ENCODE measurements at regions of chr5 and their contacts with region 1.

Region 1: DNA sequence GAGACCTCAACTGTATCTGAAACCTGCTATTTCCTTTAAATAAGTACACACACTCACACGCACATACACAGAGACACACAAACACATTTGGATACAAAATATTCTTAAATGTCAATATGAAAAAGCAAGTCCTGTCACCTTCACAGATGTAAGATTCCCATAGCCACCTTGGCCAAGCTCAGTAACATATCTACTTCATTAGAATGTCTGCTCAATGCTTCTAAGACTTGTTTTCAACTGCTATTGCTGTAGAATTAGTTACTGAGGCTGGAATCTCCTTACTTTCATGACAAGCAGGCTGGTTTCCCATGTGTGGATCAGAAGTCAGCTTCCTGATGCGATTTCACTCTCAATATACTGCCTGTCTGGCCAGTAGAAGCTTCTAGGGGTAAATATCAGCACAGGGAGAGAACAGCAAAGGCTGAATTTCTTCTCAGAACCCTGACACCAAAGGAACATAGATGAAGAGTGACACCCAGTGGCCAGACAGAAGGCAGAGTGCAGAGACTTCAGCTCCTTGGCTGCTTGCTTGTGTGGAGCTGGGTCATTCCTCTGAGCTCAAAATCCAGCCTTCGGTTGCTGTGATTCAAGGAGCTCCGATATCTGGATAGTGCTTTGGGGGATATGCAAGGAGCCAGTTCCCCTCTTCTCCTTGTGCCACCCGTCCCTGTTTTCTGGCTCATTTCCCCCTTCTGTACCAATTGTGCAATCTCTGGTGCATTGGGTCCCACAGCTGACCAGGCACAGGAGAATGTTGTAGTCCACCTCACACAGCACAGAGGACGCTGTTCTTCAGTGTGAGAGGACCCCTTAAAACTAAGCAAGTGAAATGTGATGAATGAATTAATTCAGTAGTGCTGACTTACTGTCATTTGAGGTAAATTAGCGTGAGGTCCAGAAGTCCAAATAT is 26.6 kb upstream of the ABLIM3 start:
- DNase-seq: peak; percentile 54
- H3K4me3 ChIP-seq: peak overlapping the region in 1 of 2 experiments; percentile 8; a peak in 1 of 4 replicates
- H3K27ac ChIP-seq: 0 out of 4 replicates have a peak overlapping the region, but pooled peaks of 1 of the 2 experiments have one; percentile 2
- H3K4me1 ChIP-seq: peaks cover 0 to 8% of the 10 kb centered on the region in 2 experiments; a peak in 1 of 4 replicates
- H3K27me3 ChIP-seq: no peaks in the 10 kb centered on the region
- CTCF ChIP-seq: peak; percentile 85
- EP300 ChIP-seq: no peak
- RAD21 ChIP-seq: peak; percentile 95

Region 2: GRCh38 chr5:148740966-148741742 is 373.5 kb before region 1 on chr5:
- CTCF ChIA-PET with region 1: interaction called, 233 read pairs
- POLR2A ChIA-PET with region 1: no interaction called
- DNase-seq: peak; percentile 39
- H3K4me3 ChIP-seq: no peak overlapping the region
- H3K27ac ChIP-seq: no peak overlapping the region
- H3K4me1 ChIP-seq: no peaks in the 10 kb centered on the region
- H3K27me3 ChIP-seq: no peaks in the 10 kb centered on the region
- CTCF ChIP-seq: peak; percentile 72
- EP300 ChIP-seq: no peak
- RAD21 ChIP-seq: peak; percentile 80

Region 3: DNA sequence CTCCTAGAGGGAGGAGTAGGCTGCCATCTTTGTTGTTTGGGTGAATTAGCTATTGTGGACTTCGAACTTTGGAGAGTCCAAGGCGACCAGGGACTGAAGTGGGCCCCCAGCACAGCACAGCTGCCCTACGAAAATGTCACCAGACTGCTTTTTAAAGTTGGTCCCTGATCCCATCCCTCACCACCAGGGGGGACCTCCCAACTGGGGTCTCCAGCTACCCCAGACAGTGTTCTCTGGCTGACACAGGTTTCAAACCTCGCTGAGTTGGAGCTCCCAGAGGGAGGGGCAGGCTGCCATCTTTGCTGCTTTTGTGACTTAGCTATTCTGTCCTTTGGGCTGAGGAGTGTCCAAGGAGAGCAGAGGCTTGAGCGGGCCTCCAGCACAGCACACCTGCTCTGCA is 333.9 kb before region 1 on chr5:
- CTCF ChIA-PET with region 1: interaction called, 10 read pairs
- POLR2A ChIA-PET with region 1: no interaction called
- DNase-seq: no peak
- H3K4me3 ChIP-seq: no peak overlapping the region
- H3K27ac ChIP-seq: no peak overlapping the region
- H3K4me1 ChIP-seq: no peaks in the 10 kb centered on the region
- H3K27me3 ChIP-seq: no peaks in the 10 kb centered on the region
- CTCF ChIP-seq: no peak
- EP300 ChIP-seq: no peak
- RAD21 ChIP-seq: no peak

Region 4: DNA sequence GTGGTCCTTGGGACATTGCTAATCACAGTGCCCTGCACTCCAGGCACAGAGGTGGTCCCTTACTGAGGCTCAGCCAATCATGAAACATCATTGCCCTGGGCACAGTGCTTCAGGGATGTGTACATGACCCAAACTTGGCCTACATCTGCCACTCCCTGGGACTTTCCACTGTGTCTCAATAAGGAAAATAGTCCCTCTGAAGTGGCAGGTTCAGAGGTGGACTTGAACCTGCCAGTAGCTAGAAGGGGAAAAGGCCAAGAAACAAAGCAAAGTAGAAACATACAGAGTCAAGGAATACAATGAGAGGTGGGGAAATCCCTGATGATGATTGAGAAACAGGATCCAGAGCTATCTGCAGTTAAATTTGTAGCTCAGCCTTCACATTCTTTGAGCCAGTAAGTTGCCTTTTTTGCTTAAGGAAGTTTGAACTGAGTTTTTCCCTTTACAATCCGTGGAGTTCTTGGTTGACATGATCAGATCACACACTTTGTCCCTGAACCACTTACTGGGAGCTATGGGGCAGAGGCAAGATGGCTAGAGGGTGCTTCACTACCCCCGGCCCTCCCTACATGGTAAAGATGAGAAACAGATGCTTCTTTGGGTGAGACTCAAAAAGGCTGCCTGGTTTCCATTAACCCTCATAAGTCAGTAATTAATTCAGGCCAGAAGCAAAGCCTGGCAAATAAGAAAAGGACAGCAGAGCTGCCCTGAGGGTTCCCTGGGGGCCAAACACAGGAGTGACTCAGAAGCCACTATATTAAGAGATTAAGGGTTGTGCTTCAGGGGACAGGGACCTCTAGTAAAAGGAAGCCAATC is 109.4 kb before region 1 on chr5:
- CTCF ChIA-PET with region 1: interaction called, 20 read pairs
- POLR2A ChIA-PET with region 1: no interaction called
- DNase-seq: peak; percentile 70
- H3K4me3 ChIP-seq: no peak overlapping the region
- H3K27ac ChIP-seq: no peak overlapping the region
- H3K4me1 ChIP-seq: peaks cover 7 to 12% of the 10 kb centered on the region in 2 experiments; a peak in 3 of 4 replicates
- H3K27me3 ChIP-seq: no peaks in the 10 kb centered on the region
- CTCF ChIP-seq: no peak
- EP300 ChIP-seq: peak; percentile 80 to 93
- RAD21 ChIP-seq: no peak

Region 5: GRCh38 chr5:149053072-149053695 is 61.5 kb before region 1 on chr5:
- CTCF ChIA-PET with region 1: interaction called, 14 read pairs
- POLR2A ChIA-PET with region 1: no interaction called
- DNase-seq: no peak
- H3K4me3 ChIP-seq: no peak overlapping the region
- H3K27ac ChIP-seq: peak overlapping the region in 1 of 2 experiments; percentile 39; a peak in 1 of 4 replicates
- H3K4me1 ChIP-seq: peaks cover 0 to 10% of the 10 kb centered on the region in 2 experiments; a peak in 2 of 4 replicates
- H3K27me3 ChIP-seq: no peaks in the 10 kb centered on the region
- CTCF ChIP-seq: no peak
- EP300 ChIP-seq: no peak
- RAD21 ChIP-seq: no peak

Region 6: DNA sequence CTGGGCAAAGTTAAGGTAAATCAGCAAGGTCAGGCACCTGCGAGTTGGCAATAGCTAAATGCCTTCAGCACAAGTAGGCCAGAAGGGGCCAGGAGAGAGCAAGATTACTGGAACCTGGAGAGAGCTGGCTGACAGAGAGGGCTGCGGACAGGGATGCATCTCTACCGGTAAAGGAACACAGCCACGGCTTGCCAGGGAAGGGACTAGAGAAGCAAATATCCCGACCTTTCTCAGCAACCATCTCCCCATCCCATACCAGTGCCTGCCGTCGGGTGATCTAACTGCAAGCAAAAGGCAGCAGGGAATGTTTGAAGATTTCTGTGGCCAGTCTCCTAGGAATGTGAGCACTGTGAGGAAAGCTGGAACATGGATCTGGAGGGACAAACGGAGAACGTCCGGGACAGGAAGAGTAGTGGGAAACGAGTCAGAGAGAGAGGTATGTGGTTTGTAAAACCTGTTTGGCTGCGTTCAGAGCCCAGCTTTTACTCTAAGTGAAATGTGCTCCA is 10.8 kb after region 1 on chr5:
- CTCF ChIA-PET with region 1: interaction called, 23 read pairs
- POLR2A ChIA-PET with region 1: no interaction called
- DNase-seq: no peak
- H3K4me3 ChIP-seq: no peak overlapping the region
- H3K27ac ChIP-seq: no peak overlapping the region
- H3K4me1 ChIP-seq: no peaks in the 10 kb centered on the region
- H3K27me3 ChIP-seq: no peaks in the 10 kb centered on the region
- CTCF ChIP-seq: peak; percentile 36; the same call in 1 of the 2 replicates
- EP300 ChIP-seq: no peak
- RAD21 ChIP-seq: no peak

Region 7: DNA sequence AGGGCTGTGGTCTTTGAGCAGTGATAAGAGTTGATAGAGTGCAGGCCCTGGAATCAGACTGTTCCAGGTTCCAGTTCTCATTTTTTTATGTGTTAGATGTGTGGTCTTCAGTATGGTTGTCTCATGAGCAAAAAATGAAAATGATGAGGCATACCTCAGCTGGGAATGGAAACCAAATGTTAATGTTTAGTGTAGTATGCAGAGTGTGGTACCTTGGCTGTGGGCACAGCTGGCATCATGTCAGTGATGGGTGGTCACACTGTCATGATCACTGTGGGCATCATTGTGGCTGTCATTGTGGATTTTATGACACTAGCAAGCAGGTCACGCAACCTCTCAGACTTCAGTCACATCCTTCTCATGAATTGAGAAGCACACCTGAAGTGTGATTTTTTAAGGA is 33.0 kb after region 1 on chr5:
- CTCF ChIA-PET with region 1: no interaction called
- POLR2A ChIA-PET with region 1: no interaction called
- DNase-seq: no peak
- H3K4me3 ChIP-seq: no peak overlapping the region
- H3K27ac ChIP-seq: no peak overlapping the region
- H3K4me1 ChIP-seq: peaks cover 0 to 29% of the 10 kb centered on the region in 2 experiments
- H3K27me3 ChIP-seq: no peaks in the 10 kb centered on the region
- CTCF ChIP-seq: no peak
- EP300 ChIP-seq: no peak
- RAD21 ChIP-seq: no peak